ENCODE measurements at regions of chr17 and their contacts with region 1.

Region 1: GRCh38 chr17:67942810-67943209 is 53.5 kb downstream of the C17orf58 start:
- DNase-seq: no peak
- ATAC-seq: peak; percentile 80
- H3K4me3 ChIP-seq: no peak overlapping the region
- H3K27ac ChIP-seq: no peak overlapping the region
- H3K4me1 ChIP-seq: no peaks in the 10 kb centered on the region
- H3K27me3 ChIP-seq: no peaks in the 10 kb centered on the region
- CTCF ChIP-seq: peak; percentile 21 to 86 (median 79); a peak in 4 of 6 replicates
- POLR2A ChIP-seq: no peak
- RAD21 ChIP-seq: peak; percentile 32; the same call in 1 of the 2 replicates

Region 2: GRCh38 chr17:67922503-67922902 is 20.3 kb before region 1 on chr17:
- CTCF ChIA-PET with region 1: interaction called, 11 read pairs
- POLR2A ChIA-PET with region 1: interaction called, 3 read pairs
- RAD21 ChIA-PET with region 1: no interaction called
- intact Hi-C with region 1: no loop called
- DNase-seq: no peak
- ATAC-seq: no peak
- H3K4me3 ChIP-seq: no peak overlapping the region
- H3K27ac ChIP-seq: no peak overlapping the region
- H3K4me1 ChIP-seq: no peaks in the 10 kb centered on the region
- H3K27me3 ChIP-seq: no peaks in the 10 kb centered on the region
- CTCF ChIP-seq: no peak
- POLR2A ChIP-seq: no peak
- RAD21 ChIP-seq: no peak

Region 3: GRCh38 chr17:67931233-67931632 is 11.6 kb before region 1 on chr17:
- CTCF ChIA-PET with region 1: interaction called, 11 read pairs
- POLR2A ChIA-PET with region 1: no interaction called
- RAD21 ChIA-PET with region 1: no interaction called
- intact Hi-C with region 1: no loop called
- DNase-seq: no peak
- ATAC-seq: no peak
- H3K4me3 ChIP-seq: no peak overlapping the region
- H3K27ac ChIP-seq: no peak overlapping the region
- H3K4me1 ChIP-seq: no peaks in the 10 kb centered on the region
- H3K27me3 ChIP-seq: no peaks in the 10 kb centered on the region
- CTCF ChIP-seq: no peak
- POLR2A ChIP-seq: no peak
- RAD21 ChIP-seq: no peak

Region 4: GRCh38 chr17:67959288-67959900 is 16.6 kb after region 1 on chr17:
- CTCF ChIA-PET with region 1: interaction called, 20 read pairs
- POLR2A ChIA-PET with region 1: no interaction called
- RAD21 ChIA-PET with region 1: no interaction called
- intact Hi-C with region 1: no loop called
- DNase-seq: no peak
- ATAC-seq: peak; percentile 39; the same call in 1 of the 2 replicates
- H3K4me3 ChIP-seq: no peak overlapping the region
- H3K27ac ChIP-seq: no peak overlapping the region
- H3K4me1 ChIP-seq: peaks cover 0 to 4% of the 10 kb centered on the region in 2 experiments; a peak in 1 of 4 replicates
- H3K27me3 ChIP-seq: no peaks in the 10 kb centered on the region
- CTCF ChIP-seq: peak in 1 of 3 experiments; percentile 14; a peak in 1 of 6 replicates
- POLR2A ChIP-seq: no peak
- RAD21 ChIP-seq: 0 out of 2 replicates have a peak, but pooled peaks have one; percentile 9

Region 5: GRCh38 chr17:69012895-69013805 is 1070.3 kb after region 1 on chr17:
- CTCF ChIA-PET with region 1: no interaction called
- POLR2A ChIA-PET with region 1: no interaction called
- RAD21 ChIA-PET with region 1: no interaction called
- intact Hi-C with region 1: no loop called
- DNase-seq: no peak
- ATAC-seq: no peak
- H3K4me3 ChIP-seq: no peak overlapping the region
- H3K27ac ChIP-seq: no peak overlapping the region
- H3K4me1 ChIP-seq: no peaks in the 10 kb centered on the region
- H3K27me3 ChIP-seq: no peaks in the 10 kb centered on the region
- CTCF ChIP-seq: no peak
- POLR2A ChIP-seq: no peak
- RAD21 ChIP-seq: no peak